CD14-positive monocyte (primary cell): ENCODE measurements at regions of chr18 and their contacts with region 1.

Region 1: GRCh38 chr18:13216092-13216582 is 2.4 kb upstream of the LDLRAD4 start:
- DNase-seq: peak; percentile 79 to 95 (median 91)
- H3K4me3 ChIP-seq: peak overlapping the region; percentile 35 to 83 (median 36)
- H3K4me3 Mint-ChIP-seq: peak overlapping the region; percentile 84 to 87
- H3K27ac ChIP-seq: peak overlapping the region in 1 of 2 donors; percentile 38
- H3K27ac Mint-ChIP-seq: peak overlapping the region; percentile 75 to 93 (median 83)
- H3K4me1 ChIP-seq: peaks cover 43 to 52% of the 10 kb centered on the region in 2 donors
- H3K4me1 Mint-ChIP-seq: peaks cover 51% of the 10 kb centered on the region
- H3K27me3 ChIP-seq: peaks cover 0 to 2% of the 10 kb centered on the region in 2 donors
- H3K27me3 Mint-ChIP-seq: peaks cover 14 to 19% (median 14%) of the 10 kb centered on the region in 3 donors
- CTCF ChIP-seq: peak; percentile 58

Region 2: GRCh38 chr18:13452388-13452811 is 236.3 kb after region 1 on chr18:
- intact Hi-C with region 1: loop called in 1 of 2 experiments (anchors 10 kb)
- DNase-seq: peak in 1 of 3 donors; percentile 19
- H3K4me3 ChIP-seq: peak overlapping the region in 1 of 3 experiments; percentile 23
- H3K4me3 Mint-ChIP-seq: peak overlapping the region in 1 of 2 donors; percentile 73
- H3K27ac ChIP-seq: peak overlapping the region; percentile 43 to 67
- H3K27ac Mint-ChIP-seq: peak overlapping the region in 6 of 7 donors; percentile 15 to 81 (median 75)
- H3K4me1 ChIP-seq: peaks cover 31 to 36% of the 10 kb centered on the region in 2 donors
- H3K4me1 Mint-ChIP-seq: peaks cover 46% of the 10 kb centered on the region
- H3K27me3 ChIP-seq: no peaks in the 10 kb centered on the region
- H3K27me3 Mint-ChIP-seq: peaks cover 0 to 4% (median 3%) of the 10 kb centered on the region in 3 donors
- CTCF ChIP-seq: no peak

Region 3: GRCh38 chr18:13464432-13465123 is 248.4 kb after region 1 on chr18:
- intact Hi-C with region 1: loop called (anchors 10 kb)
- DNase-seq: peak; percentile 73 to 91 (median 86)
- H3K4me3 ChIP-seq: peak overlapping the region; percentile 42 to 73 (median 52)
- H3K4me3 Mint-ChIP-seq: peak overlapping the region; percentile 84 to 93
- H3K27ac ChIP-seq: peak overlapping the region; percentile 49 to 91
- H3K27ac Mint-ChIP-seq: peak overlapping the region; percentile 91 to 97 (median 95)
- H3K4me1 ChIP-seq: peaks cover 27 to 41% of the 10 kb centered on the region in 2 donors
- H3K4me1 Mint-ChIP-seq: peaks cover 48% of the 10 kb centered on the region
- H3K27me3 ChIP-seq: no peaks in the 10 kb centered on the region
- H3K27me3 Mint-ChIP-seq: peaks cover 0 to 1% (median 0%) of the 10 kb centered on the region in 3 donors
- CTCF ChIP-seq: no peak

Region 4: DNA sequence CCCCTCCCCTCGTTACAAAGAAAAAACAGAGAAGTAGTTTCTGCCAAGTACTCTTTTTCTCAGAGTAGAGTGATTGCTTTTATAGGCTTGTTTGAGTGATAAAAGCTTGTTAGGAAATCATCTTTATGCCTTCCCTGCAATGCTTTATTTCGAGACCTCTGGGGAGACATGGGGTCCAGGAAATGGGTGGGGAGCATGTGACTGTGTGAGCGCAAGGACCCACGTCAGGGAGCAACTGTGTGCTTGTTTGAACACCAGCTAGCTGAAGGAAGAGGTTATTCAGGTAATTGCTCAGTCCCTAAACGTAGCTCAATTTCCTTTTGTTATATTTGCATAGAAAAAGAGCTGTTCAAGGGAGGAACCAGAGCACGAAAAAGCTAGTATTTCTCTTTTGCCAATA is 322.9 kb after region 1 on chr18:
- intact Hi-C with region 1: loop called in 1 of 2 experiments (anchors 5 kb)
- DNase-seq: no peak
- H3K4me3 ChIP-seq: no peak overlapping the region
- H3K4me3 Mint-ChIP-seq: peak overlapping the region in 1 of 2 donors; percentile 48
- H3K27ac ChIP-seq: no peak overlapping the region
- H3K27ac Mint-ChIP-seq: peak overlapping the region in 5 of 7 donors; percentile 19 to 82 (median 48)
- H3K4me1 ChIP-seq: peaks cover 7 to 11% of the 10 kb centered on the region in 2 donors
- H3K4me1 Mint-ChIP-seq: peaks cover 24% of the 10 kb centered on the region
- H3K27me3 ChIP-seq: no peaks in the 10 kb centered on the region
- H3K27me3 Mint-ChIP-seq: peaks cover 0 to 2% (median 0%) of the 10 kb centered on the region in 3 donors
- CTCF ChIP-seq: no peak

Region 5: GRCh38 chr18:13577091-13577697 is 361.1 kb after region 1 on chr18:
- intact Hi-C with region 1: loop called in 1 of 2 experiments (anchors 10 kb)
- DNase-seq: peak; percentile 82 to 92 (median 88)
- H3K4me3 ChIP-seq: peak overlapping the region; percentile 20 to 58 (median 24)
- H3K4me3 Mint-ChIP-seq: peak overlapping the region; percentile 53 to 75
- H3K27ac ChIP-seq: peak overlapping the region; percentile 89 to 92
- H3K27ac Mint-ChIP-seq: peak overlapping the region; percentile 95 to 98 (median 98)
- H3K4me1 ChIP-seq: peaks cover 48% of the 10 kb centered on the region in 2 donors
- H3K4me1 Mint-ChIP-seq: peaks cover 46% of the 10 kb centered on the region
- H3K27me3 ChIP-seq: no peaks in the 10 kb centered on the region
- H3K27me3 Mint-ChIP-seq: peaks cover 2% of the 10 kb centered on the region in 3 donors
- CTCF ChIP-seq: no peak

Region 6: DNA sequence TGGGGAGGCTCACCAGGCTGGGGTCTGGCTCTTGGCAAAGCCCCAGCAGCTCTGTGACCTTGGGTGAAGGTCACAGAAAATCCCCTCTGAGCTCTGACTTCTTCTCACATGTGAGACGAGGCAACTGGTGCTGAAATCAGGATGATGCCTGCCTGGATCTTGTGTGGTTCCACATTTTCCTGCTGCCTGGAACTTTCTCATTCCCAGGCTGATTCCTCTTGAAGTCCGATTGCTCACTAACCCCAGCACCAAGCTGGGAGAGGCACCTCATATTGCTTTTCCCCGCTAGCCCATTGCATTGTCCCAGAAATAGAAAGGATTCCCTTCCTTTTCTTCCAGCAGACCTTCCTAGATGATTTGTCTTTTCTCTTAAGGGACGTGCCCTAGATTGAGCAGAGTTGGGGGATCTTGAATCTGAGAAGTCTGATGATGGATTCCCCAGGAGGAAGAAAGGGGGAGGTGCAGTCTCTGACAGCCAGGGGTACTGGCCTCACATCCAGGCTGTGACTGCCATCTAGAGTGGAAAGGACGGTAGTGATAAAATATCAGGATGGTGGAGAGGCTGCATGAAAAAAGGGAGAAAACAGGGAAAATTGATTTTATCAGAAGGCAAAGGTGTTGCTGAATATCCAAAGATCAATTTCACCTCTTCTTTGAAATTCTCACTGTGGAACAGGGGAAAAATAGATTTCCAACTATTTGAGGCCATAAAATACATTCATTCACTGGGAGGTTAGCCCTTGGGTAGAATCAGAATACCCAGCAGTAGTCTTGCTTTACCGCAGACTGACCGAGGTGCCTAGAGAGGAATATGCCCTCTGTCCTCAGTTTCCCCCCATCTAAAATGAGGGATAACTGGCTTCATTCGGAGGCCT is 413.9 kb after region 1 on chr18:
- intact Hi-C with region 1: loop called in 1 of 2 experiments (anchors 10 kb)
- DNase-seq: peak; percentile 54 to 70 (median 60)
- H3K4me3 ChIP-seq: no peak overlapping the region
- H3K4me3 Mint-ChIP-seq: no peak overlapping the region
- H3K27ac ChIP-seq: no peak overlapping the region
- H3K27ac Mint-ChIP-seq: peak overlapping the region in 6 of 7 donors; percentile 1 to 53 (median 42)
- H3K4me1 ChIP-seq: peaks cover 0 to 4% of the 10 kb centered on the region in 2 donors
- H3K4me1 Mint-ChIP-seq: peaks cover 6% of the 10 kb centered on the region
- H3K27me3 ChIP-seq: no peaks in the 10 kb centered on the region
- H3K27me3 Mint-ChIP-seq: peaks cover 0 to 4% (median 3%) of the 10 kb centered on the region in 3 donors
- CTCF ChIP-seq: peak; percentile 84